RWPE1 (cell line): ENCODE measurements at regions of chr1 and their contacts with region 1.

Region 1: DNA sequence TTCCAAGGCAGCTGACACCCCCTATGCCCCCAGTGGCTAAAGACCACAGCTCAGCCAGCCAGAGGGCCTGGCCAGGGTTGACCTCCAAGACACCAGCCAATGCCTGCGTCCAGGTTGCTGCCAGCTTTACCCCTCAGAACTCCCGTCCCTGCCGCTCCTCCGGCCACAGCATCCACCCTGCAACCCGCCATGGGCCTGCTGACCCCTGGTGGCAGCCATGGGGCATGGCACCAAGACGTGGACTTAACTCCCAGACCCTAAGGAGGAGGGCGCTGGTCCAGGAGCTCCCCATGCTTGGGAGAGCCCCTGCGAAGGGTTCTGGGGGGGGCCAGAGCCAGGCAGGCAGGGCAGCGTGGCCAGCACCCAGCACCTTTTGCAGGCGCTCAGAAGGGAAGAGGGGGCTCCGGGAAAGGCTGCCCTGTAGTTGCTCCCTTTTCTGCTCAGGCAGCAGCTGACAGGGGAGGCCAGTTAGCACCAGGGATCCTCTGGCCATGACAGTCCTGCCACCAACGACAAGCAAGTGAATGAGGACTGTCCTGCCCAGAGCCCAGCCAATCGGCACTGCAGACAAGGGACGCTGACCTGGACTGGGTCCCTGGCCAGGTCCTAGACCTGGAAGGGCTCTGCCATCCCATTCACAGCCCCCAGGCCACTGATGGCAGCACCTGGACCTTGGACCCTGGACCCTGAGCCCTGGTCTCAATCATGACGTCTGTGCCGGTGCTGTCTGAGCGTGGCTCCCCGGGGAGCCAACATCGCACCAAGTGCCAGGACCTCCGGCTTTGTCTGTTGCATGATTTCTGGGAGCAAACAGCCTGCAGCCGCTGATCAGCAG is 246.2 kb downstream of the NPHP4 start:
- DNase-seq: peak; percentile 87
- H3K27ac ChIP-seq: no peak overlapping the region
- CTCF ChIP-seq: peak; percentile 92

Region 2: GRCh38 chr1:5509664-5510452 is 236.1 kb before region 1 on chr1:
- CTCF ChIA-PET with region 1: interaction called, 27 read pairs
- POLR2A ChIA-PET with region 1: no interaction called
- DNase-seq: peak; percentile 83
- H3K27ac ChIP-seq: no peak overlapping the region
- CTCF ChIP-seq: peak; percentile 92

Region 3: DNA sequence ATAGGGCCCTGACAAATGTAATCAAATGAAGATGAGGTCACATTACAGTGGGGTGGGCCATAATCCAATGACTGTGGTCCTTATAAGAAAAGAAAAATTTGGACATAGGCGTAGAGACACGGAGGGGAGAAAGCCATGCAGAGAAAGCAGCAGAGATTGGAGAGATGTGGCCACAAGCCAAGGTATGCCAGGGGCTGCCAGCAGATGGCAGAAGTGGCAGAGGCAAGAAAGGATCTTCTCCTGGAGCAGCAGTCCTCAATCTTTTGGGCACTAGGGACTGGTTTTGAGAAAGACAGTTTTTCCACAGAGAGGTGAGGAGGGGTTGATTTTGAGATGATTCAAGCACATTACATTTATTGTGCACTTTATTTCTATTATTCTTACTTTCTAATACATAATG is 108.8 kb before region 1 on chr1:
- CTCF ChIA-PET with region 1: interaction called, 34 read pairs
- POLR2A ChIA-PET with region 1: no interaction called
- DNase-seq: no peak
- H3K27ac ChIP-seq: no peak overlapping the region
- CTCF ChIP-seq: peak; percentile 66

Region 4: GRCh38 chr1:5888606-5889211 is 142.7 kb after region 1 on chr1:
- CTCF ChIA-PET with region 1: no interaction called
- POLR2A ChIA-PET with region 1: no interaction called
- DNase-seq: no peak
- H3K27ac ChIP-seq: no peak overlapping the region
- CTCF ChIP-seq: no peak